Left ventricle myocardium inferior (tissue), 1 donor: ENCODE measurements at regions of chr7 and their contacts with region 1.

Region 1: DNA sequence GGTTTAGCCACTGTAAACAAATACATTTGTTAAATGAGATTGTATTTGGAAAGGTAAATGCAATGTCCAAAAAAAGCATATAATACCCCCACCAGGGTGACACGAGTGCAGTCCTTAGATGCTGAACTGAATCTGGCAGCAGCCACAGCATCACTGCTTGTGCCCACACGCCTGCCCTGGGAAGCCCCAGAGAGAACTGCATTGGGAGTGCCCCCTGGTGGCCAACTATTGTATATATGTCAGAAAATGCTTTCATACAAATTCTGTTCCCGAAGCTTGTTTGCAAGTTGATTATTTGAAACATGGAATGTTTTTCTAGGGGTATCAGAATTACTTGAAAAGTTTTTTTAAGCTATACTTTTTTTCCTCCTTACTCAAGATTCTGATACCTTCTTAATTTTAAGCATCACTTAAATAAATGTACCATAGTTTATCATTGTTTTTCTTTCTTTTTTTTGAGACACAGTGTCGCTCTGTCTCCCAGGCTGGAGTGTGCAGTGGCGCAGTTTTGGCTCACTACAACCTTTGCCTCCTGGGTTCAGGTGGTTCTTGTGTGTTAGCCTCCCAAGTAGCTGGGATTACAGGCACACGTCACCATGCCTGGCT is 50.1 kb downstream of the LANCL2 start:
- DNase-seq: peak; percentile 68
- H3K4me3 ChIP-seq: no peak overlapping the region
- H3K27ac ChIP-seq: no peak overlapping the region
- H3K4me1 ChIP-seq: no peaks in the 10 kb centered on the region
- H3K27me3 ChIP-seq: no peaks in the 10 kb centered on the region
- CTCF ChIP-seq: peak; percentile 85

Region 2: GRCh38 chr7:55280031-55280454 is 135.2 kb before region 1 on chr7:
- intact Hi-C with region 1: loop called (anchors 2 kb)
- DNase-seq: peak; percentile 24
- H3K4me3 ChIP-seq: no peak overlapping the region
- H3K27ac ChIP-seq: no peak overlapping the region
- H3K4me1 ChIP-seq: no peaks in the 10 kb centered on the region
- H3K27me3 ChIP-seq: peaks cover 10% of the 10 kb centered on the region
- CTCF ChIP-seq: peak; percentile 69

Region 3: GRCh38 chr7:55546829-55547228 is 131.6 kb after region 1 on chr7:
- intact Hi-C with region 1: no loop called
- DNase-seq: peak; percentile 71
- H3K4me3 ChIP-seq: no peak overlapping the region
- H3K27ac ChIP-seq: peak overlapping the region; percentile 68
- H3K4me1 ChIP-seq: peaks cover 59% of the 10 kb centered on the region
- H3K27me3 ChIP-seq: no peaks in the 10 kb centered on the region
- CTCF ChIP-seq: no peak